ENCODE measurements at regions of chr13 and their contacts with region 1.

Region 1: GRCh38 chr13:20924758-20925394 is 22.3 kb upstream of the XPO4 start:
- DNase-seq: peak; percentile 54 to 79 (median 58)
- H3K4me3 ChIP-seq: no peak overlapping the region
- H3K4me3 Mint-ChIP-seq: no peak overlapping the region
- H3K27ac ChIP-seq: no peak overlapping the region
- H3K27ac Mint-ChIP-seq: no peak overlapping the region
- H3K4me1 ChIP-seq: no peaks in the 10 kb centered on the region
- H3K4me1 Mint-ChIP-seq: no peaks in the 10 kb centered on the region
- H3K27me3 ChIP-seq: no peaks in the 10 kb centered on the region
- H3K27me3 Mint-ChIP-seq: no peaks in the 10 kb centered on the region

Region 2: GRCh38 chr13:20303636-20304035 is 621.2 kb before region 1 on chr13:
- CTCF ChIA-PET with region 1: no interaction called
- POLR2A ChIA-PET with region 1: no interaction called
- DNase-seq: no peak
- H3K4me3 ChIP-seq: no peak overlapping the region
- H3K4me3 Mint-ChIP-seq: no peak overlapping the region
- H3K27ac ChIP-seq: no peak overlapping the region
- H3K27ac Mint-ChIP-seq: no peak overlapping the region
- H3K4me1 ChIP-seq: no peaks in the 10 kb centered on the region
- H3K4me1 Mint-ChIP-seq: peaks cover 0 to 4% (median 0%) of the 10 kb centered on the region in 3 donors
- H3K27me3 ChIP-seq: peaks cover 16% of the 10 kb centered on the region
- H3K27me3 Mint-ChIP-seq: peaks cover 33 to 65% of the 10 kb centered on the region in 2 donors

Region 3: GRCh38 chr13:20495082-20496023 is 429.5 kb before region 1 on chr13:
- CTCF ChIA-PET with region 1: interaction called, 35 read pairs
- POLR2A ChIA-PET with region 1: no interaction called
- DNase-seq: peak; percentile 20 to 70 (median 51)
- H3K4me3 ChIP-seq: no peak overlapping the region
- H3K4me3 Mint-ChIP-seq: no peak overlapping the region
- H3K27ac ChIP-seq: no peak overlapping the region
- H3K27ac Mint-ChIP-seq: no peak overlapping the region
- H3K4me1 ChIP-seq: no peaks in the 10 kb centered on the region
- H3K4me1 Mint-ChIP-seq: peaks cover 0 to 6% (median 3%) of the 10 kb centered on the region in 3 donors
- H3K27me3 ChIP-seq: no peaks in the 10 kb centered on the region
- H3K27me3 Mint-ChIP-seq: peaks cover 0 to 1% of the 10 kb centered on the region in 2 donors

Region 4: GRCh38 chr13:20902438-20903163 is 22.3 kb before region 1 on chr13 and contains the start of gene XPO4:
- CTCF ChIA-PET with region 1: no interaction called
- POLR2A ChIA-PET with region 1: no interaction called
- DNase-seq: peak; percentile 69 to 84 (median 79)
- H3K4me3 ChIP-seq: peak within 1 kb of the TSS; percentile 88
- H3K4me3 Mint-ChIP-seq: peak within 1 kb of the TSS; percentile 92 to 98 (median 94)
- H3K27ac ChIP-seq: peak within 1 kb of the TSS; percentile 84
- H3K27ac Mint-ChIP-seq: peak within 1 kb of the TSS; percentile 87 to 98 (median 96)
- H3K4me1 ChIP-seq: peaks cover 18% of the 10 kb centered on the region
- H3K4me1 Mint-ChIP-seq: peaks cover 30 to 47% (median 34%) of the 10 kb centered on the region in 3 donors
- H3K27me3 ChIP-seq: no peaks in the 10 kb centered on the region
- H3K27me3 Mint-ChIP-seq: peaks cover 0 to 4% of the 10 kb centered on the region in 2 donors
- total RNA-seq, gene XPO4: 30.3 to 30.4 TPM

Region 5: GRCh38 chr13:21240586-21240985 is 315.7 kb after region 1 on chr13:
- CTCF ChIA-PET with region 1: no interaction called
- POLR2A ChIA-PET with region 1: no interaction called
- DNase-seq: no peak
- H3K4me3 ChIP-seq: no peak overlapping the region
- H3K4me3 Mint-ChIP-seq: no peak overlapping the region
- H3K27ac ChIP-seq: no peak overlapping the region
- H3K27ac Mint-ChIP-seq: peak overlapping the region in 1 of 8 donors; percentile 68
- H3K4me1 ChIP-seq: no peaks in the 10 kb centered on the region
- H3K4me1 Mint-ChIP-seq: no peaks in the 10 kb centered on the region
- H3K27me3 ChIP-seq: no peaks in the 10 kb centered on the region
- H3K27me3 Mint-ChIP-seq: peaks cover 3 to 24% of the 10 kb centered on the region in 2 donors

Measured in CD8-positive, alpha-beta memory T cell (primary cell).